ENCODE measurements at regions of chr1 and their contacts with region 1.

Region 1: DNA sequence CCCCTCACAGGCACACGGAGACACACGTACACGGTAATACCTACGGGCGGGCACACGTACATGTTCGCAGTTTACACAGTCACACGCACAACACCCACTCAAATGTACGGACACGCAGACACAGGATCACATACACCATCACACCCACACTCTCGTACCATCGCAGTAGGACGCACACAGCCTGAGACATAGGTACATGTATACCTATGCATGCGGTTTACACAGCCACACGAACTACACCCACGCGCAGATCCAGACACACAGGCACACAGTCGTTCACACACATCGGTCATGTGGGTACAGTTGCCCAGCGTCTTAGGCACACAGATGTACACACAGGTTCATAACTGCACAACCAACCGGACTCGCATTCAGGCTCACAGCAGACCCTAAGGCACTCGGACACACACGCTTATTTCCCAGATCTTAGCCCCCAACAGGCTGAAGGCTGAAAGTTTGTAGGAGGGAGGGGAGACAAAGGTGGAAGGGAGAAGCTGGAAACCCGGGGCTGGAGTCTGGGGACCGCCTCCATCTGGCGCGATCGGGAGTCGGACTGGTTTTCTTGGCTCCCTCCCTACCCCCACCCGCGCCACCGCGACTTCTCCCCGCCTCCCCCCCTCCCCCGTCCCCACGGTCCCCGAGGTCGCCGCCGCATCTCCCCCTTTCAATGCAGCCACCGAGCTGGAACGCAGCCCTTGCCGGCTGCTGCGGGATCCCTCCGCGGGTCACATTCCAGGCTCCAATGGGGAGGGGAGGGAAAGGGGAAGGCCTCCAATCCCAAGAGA is 51.9 kb upstream of the SYNC start:
- DNase-seq: no peak
- ATAC-seq: peak; percentile 48
- H3K4me3 ChIP-seq: peak overlapping the region; percentile 63 to 98
- H3K27ac ChIP-seq: peak overlapping the region; percentile 90
- H3K4me1 ChIP-seq: peaks cover 41% of the 10 kb centered on the region
- H3K27me3 ChIP-seq: no peaks in the 10 kb centered on the region
- CTCF ChIP-seq: no peak

Region 2: GRCh38 chr1:32205401-32206370 is 548.8 kb before region 1 on chr1 and contains the start of gene IQCC:
- CTCF ChIA-PET with region 1: no interaction called
- POLR2A ChIA-PET with region 1: no interaction called
- in situ Hi-C with region 1: no loop called
- intact Hi-C with region 1: no loop called
- DNase-seq: no peak
- ATAC-seq: peak; percentile 88
- H3K4me3 ChIP-seq: peak within 1 kb of the TSS; percentile 63 to 90
- H3K27ac ChIP-seq: peak within 1 kb of the TSS; percentile 77
- H3K4me1 ChIP-seq: peaks cover 24% of the 10 kb centered on the region
- H3K27me3 ChIP-seq: no peaks in the 10 kb centered on the region
- CTCF ChIP-seq: no peak
- total RNA-seq, gene IQCC: 4.4 TPM

Region 3: GRCh38 chr1:32666901-32667566 is 87.5 kb before region 1 on chr1:
- CTCF ChIA-PET with region 1: no interaction called
- POLR2A ChIA-PET with region 1: no interaction called
- in situ Hi-C with region 1: no loop called
- intact Hi-C with region 1: no loop called
- DNase-seq: no peak
- ATAC-seq: no peak
- H3K4me3 ChIP-seq: no peak overlapping the region
- H3K27ac ChIP-seq: no peak overlapping the region
- H3K4me1 ChIP-seq: no peaks in the 10 kb centered on the region
- H3K27me3 ChIP-seq: no peaks in the 10 kb centered on the region
- CTCF ChIP-seq: no peak

Region 4: DNA sequence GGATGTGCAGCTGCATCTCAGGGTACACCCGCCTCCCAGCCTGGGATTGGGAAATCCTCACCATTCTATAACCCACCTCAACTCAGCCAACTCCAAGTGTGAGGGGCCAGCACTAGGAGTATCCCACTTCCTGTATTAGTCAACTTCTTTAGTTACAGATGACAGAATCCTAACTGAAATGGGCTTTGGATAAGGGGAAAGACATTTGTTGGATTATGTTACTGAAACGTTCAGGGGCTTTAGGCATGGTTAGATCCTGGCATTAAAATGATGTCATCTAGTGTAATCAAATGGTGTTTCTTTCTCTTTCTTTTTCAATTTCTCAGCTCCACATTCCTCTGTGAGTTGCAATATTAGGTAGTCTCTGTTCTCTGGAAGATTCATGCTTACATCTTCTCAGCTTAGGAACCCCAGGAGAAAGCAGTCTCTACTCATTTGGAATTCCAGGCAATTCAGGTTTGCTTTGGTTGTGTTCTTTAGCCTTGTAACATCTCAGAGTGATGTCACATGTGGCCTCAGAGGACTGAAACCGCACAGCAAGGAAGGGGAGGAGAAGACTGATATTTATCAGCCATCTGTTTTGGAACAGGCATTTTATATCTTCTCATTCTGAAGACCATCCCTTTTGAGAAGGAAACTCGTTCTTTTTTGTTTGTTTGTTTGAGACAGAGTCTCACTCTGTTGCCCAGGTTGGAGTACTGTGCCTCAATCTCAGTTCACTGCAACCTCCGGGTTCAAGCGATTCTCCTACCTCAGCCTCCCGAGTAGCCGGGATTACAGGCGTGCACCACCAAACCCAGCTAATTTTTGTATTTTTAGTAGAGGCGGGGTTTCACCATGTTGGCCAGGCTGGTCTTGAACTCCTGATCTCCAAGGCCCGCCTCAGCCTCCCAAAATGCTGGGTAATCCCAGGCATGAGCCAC is 165.6 kb after region 1 on chr1:
- CTCF ChIA-PET with region 1: no interaction called
- POLR2A ChIA-PET with region 1: no interaction called
- in situ Hi-C with region 1: no loop called
- intact Hi-C with region 1: no loop called
- DNase-seq: no peak
- ATAC-seq: no peak
- H3K4me3 ChIP-seq: no peak overlapping the region
- H3K27ac ChIP-seq: no peak overlapping the region
- H3K4me1 ChIP-seq: 0 out of 2 replicates have a peak, but pooled peaks cover 3% of the 10 kb centered on the region
- H3K27me3 ChIP-seq: no peaks in the 10 kb centered on the region
- CTCF ChIP-seq: no peak

Region 5: DNA sequence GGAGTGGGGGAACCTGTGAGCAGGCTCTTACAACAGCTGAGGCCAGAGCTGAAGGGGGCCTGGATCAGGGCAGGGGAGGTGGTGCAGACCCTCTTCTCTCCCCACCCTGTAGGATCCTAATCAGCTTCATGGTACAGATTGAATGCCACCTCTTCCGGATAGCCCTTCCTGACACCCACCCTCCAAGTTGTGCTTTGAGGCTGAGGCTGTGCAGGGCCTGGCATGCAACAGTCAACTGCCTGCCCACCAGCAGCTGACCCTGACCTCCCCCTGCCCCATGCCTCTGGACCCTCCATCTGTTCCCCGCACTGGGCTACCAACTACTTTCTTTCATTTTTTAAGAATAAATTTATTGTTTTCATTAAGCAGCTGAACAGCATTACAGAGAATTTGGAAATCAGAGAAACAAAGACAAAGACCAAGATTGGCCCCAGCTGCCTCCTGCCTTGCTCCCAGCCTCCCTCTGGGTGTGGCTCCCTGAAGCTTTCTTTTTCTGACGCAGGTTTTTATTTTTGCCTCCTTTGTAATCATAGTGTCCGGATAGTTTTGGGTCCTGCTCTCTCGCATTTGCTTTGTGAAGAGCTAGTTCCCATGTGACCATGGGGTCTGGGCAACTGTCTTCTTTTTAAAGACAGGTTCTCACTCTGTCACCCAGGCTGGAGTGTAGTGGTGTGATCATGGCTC is 514.6 kb after region 1 on chr1:
- CTCF ChIA-PET with region 1: interaction called, 14 read pairs
- POLR2A ChIA-PET with region 1: no interaction called
- in situ Hi-C with region 1: no loop called
- intact Hi-C with region 1: no loop called
- DNase-seq: no peak
- ATAC-seq: no peak
- H3K4me3 ChIP-seq: no peak overlapping the region
- H3K27ac ChIP-seq: no peak overlapping the region
- H3K4me1 ChIP-seq: no peaks in the 10 kb centered on the region
- H3K27me3 ChIP-seq: no peaks in the 10 kb centered on the region
- CTCF ChIP-seq: no peak